A549 (cell line): ENCODE measurements at regions of chr11 and their contacts with region 1.

Region 1: GRCh38 chr11:101456812-101457211 is 127.0 kb downstream of the TRPC6 start:
- DNase-seq: no peak
- ATAC-seq: peak in 1 of 2 experiments; percentile 58; a peak in 2 of 6 replicates
- H3K4me3 ChIP-seq: no peak overlapping the region
- H3K27ac ChIP-seq: no peak overlapping the region
- H3K4me1 ChIP-seq: peaks cover 2% of the 10 kb centered on the region; the same call in 1 of the 3 replicates
- CTCF ChIP-seq: peak; percentile 33; the same call in 1 of the 3 replicates
- EP300 ChIP-seq: no peak
- POLR2A ChIP-seq: no peak
- RAD21 ChIP-seq: peak; percentile 64 to 81

Region 2: GRCh38 chr11:101296896-101297295 is 159.9 kb before region 1 on chr11:
- CTCF ChIA-PET with region 1: no interaction called
- POLR2A ChIA-PET with region 1: no interaction called
- DNase-seq: no peak
- ATAC-seq: no peak
- H3K4me3 ChIP-seq: no peak overlapping the region
- H3K27ac ChIP-seq: no peak overlapping the region
- H3K4me1 ChIP-seq: no peaks in the 10 kb centered on the region
- CTCF ChIP-seq: no peak
- EP300 ChIP-seq: no peak
- POLR2A ChIP-seq: no peak
- RAD21 ChIP-seq: no peak

Region 3: DNA sequence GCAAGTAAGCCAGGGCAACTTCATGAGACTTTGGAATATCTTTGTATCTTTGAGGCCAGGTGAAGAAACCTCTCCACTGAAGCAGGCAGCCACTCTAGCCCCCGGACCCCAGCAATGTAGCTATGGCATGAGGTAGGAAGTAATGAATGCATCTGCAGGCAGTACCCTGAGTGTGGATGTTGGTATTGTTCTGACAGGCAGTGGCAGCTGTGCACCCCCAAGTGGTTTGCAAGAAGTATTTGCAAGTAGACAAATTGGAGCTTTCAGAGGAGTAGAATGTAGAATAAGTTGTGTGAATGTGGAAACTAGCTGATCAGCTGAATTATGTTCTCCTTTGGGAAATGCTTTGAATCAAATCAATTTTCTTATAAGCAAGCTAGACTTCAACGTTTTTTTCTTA is 132.8 kb before region 1 on chr11:
- CTCF ChIA-PET with region 1: no interaction called
- POLR2A ChIA-PET with region 1: no interaction called
- DNase-seq: peak in 1 of 2 experiments; percentile 1
- ATAC-seq: no peak
- H3K4me3 ChIP-seq: no peak overlapping the region
- H3K27ac ChIP-seq: no peak overlapping the region
- H3K4me1 ChIP-seq: no peaks in the 10 kb centered on the region
- CTCF ChIP-seq: no peak
- EP300 ChIP-seq: no peak
- POLR2A ChIP-seq: no peak
- RAD21 ChIP-seq: no peak

Region 4: GRCh38 chr11:101470881-101471520 is 14.2 kb after region 1 on chr11:
- CTCF ChIA-PET with region 1: interaction called, 10 read pairs
- POLR2A ChIA-PET with region 1: no interaction called
- DNase-seq: peak in 1 of 2 experiments; percentile 3
- ATAC-seq: peak; percentile 53 to 54; a peak in 3 of 6 replicates
- H3K4me3 ChIP-seq: no peak overlapping the region
- H3K27ac ChIP-seq: no peak overlapping the region
- H3K4me1 ChIP-seq: 0 out of 3 replicates have a peak, but pooled peaks cover 6% of the 10 kb centered on the region
- CTCF ChIP-seq: no peak
- EP300 ChIP-seq: no peak
- POLR2A ChIP-seq: no peak
- RAD21 ChIP-seq: no peak

Region 5: DNA sequence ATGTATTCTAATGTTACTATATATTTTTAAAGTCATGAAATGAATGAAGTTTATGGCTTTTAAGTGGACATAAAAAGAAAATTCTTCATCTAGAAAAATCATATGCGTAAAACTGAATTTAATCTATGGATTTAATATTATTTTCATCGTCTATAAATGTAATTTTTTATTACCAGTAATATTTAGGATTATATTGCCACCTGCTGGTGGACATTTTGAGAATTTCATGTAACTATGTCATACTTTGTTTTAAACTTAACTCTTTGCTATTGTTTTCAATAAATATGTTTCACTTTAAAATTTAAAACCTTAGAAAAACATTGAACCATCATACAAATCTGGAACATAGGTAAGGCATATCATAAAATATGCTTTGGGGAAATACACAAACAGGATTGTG is 391.4 kb after region 1 on chr11:
- CTCF ChIA-PET with region 1: interaction called, 71 read pairs
- POLR2A ChIA-PET with region 1: no interaction called
- DNase-seq: peak in 1 of 2 experiments; percentile 16
- ATAC-seq: no peak
- H3K4me3 ChIP-seq: no peak overlapping the region
- H3K27ac ChIP-seq: no peak overlapping the region
- H3K4me1 ChIP-seq: no peaks in the 10 kb centered on the region
- CTCF ChIP-seq: peak; percentile 43; the same call in 1 of the 3 replicates
- EP300 ChIP-seq: no peak
- POLR2A ChIP-seq: no peak
- RAD21 ChIP-seq: peak; percentile 67 to 82